ENCODE measurements at regions of chr11 and their contacts with region 1.

Region 1: DNA sequence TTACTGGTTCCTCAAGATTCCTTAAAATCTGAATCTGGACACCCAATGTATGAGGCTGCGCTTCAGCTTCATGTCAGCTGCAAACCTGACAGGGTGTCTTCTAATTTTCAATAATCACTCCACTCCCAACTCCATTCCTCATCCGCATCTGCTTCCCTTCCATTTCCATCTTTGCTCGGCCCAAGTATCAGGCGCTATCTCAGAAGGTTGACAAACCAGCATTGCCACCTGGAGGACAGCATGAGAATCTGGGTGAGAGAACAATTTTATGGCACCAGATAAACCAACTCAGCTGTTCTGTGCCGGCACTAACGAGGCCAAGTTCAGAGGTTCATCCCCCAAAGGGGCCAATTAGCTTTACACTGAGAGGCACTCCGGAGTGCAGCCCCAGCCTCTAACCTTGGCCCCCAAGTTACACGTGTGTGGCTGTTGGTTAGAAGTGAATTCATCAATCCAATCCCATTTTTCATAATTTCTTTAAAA is 79.1 kb upstream of the LMO2 start:
- DNase-seq: peak in 5 of 10 donors; percentile 11 to 77 (median 27)

Region 2: GRCh38 chr11:33857933-33858371 is 113.1 kb before region 1 on chr11:
- intact Hi-C with region 1: loop called (anchors 1 kb)
- DNase-seq: peak; percentile 43 to 95 (median 75)

Measured in posterior cingulate gyrus (tissue), 11 donors.